Esophagus muscularis mucosa (tissue), 4 donors: ENCODE measurements at regions of chr1 and their contacts with region 1.

Region 1: GRCh38 chr1:41282679-41283317 is 40.7 kb upstream of the SCMH1 start:
- DNase-seq: no peak
- H3K4me3 ChIP-seq: no peak overlapping the region
- H3K27ac ChIP-seq: no peak overlapping the region
- H3K4me1 ChIP-seq: peaks cover 0 to 26% (median 11%) of the 10 kb centered on the region in 4 donors
- H3K27me3 ChIP-seq: peaks cover 0 to 39% (median 0%) of the 10 kb centered on the region in 4 donors
- CTCF ChIP-seq: peak; percentile 67 to 87 (median 79)
- EP300 ChIP-seq: no peak
- POLR2A ChIP-seq: no peak

Region 2: DNA sequence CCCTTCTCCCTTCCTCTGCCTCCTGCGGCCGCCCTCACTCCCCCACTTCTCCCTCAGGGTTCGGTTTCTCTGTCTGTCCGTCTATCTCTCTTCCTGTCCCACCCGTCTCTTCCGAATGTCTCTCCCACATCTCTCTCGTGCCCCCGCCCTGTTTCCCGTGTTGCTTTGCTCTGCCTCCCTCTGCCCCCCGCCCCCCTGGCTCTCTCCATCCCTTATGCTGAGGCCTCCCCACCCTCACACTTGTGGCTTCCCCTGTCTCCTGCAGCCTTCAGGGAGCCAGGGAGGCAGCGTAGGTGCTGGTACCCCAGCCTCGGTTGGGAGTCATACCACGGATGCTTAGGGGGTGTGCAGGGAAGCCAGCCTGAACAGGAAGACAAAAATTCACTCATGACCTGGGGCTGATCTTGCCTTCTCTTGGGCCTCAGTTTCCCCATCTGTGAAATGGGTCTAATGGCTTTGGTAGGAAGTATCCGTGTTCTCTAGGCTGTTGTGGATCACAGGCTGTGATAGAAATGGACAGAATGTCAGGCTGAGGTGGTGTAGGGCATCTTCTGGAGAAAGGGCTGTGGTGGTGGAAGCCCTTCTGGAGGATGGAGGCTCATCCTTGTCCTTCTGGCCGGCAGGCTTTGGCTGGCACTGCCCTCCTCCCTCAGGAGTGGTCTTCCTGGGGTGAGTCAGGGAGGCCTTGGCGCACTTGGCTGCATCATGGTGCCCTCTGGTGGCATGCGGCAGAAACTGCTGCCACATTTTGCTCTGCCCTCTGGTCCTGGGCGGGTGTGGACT is 133.9 kb after region 1 on chr1:
- intact Hi-C with region 1: loop called (anchors 2 kb)
- DNase-seq: no peak
- H3K4me3 ChIP-seq: no peak overlapping the region
- H3K27ac ChIP-seq: no peak overlapping the region
- H3K4me1 ChIP-seq: peaks cover 11 to 27% (median 12%) of the 10 kb centered on the region in 4 donors
- H3K27me3 ChIP-seq: no peaks in the 10 kb centered on the region
- CTCF ChIP-seq: peak; percentile 88 to 97 (median 93)
- EP300 ChIP-seq: no peak
- POLR2A ChIP-seq: no peak

Region 3: DNA sequence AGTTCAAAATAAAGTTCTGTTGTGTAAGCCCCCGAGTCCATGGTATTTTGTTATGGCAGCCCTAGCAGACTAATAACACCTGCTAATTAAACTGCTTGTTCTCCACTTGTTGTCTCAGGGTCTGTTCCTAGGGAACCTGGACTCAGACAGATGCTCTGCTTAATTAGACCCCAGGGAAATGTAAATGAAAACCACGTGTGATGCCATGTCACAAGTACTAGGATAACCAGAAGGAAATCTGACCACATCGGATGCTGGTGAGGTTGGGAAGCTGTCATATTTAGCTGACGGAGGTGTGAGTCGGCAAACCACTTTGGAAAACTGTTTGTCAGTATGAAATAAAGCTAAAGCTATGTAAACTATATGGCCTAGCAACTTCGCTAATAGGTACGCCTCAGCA is 182.1 kb after region 1 on chr1:
- intact Hi-C with region 1: no loop called
- DNase-seq: no peak
- H3K4me3 ChIP-seq: no peak overlapping the region
- H3K27ac ChIP-seq: no peak overlapping the region
- H3K4me1 ChIP-seq: peaks cover 0 to 35% (median 29%) of the 10 kb centered on the region in 4 donors
- H3K27me3 ChIP-seq: no peaks in the 10 kb centered on the region
- CTCF ChIP-seq: no peak
- EP300 ChIP-seq: no peak
- POLR2A ChIP-seq: no peak